ENCODE measurements at regions of chr22 and their contacts with region 1.

Region 1: DNA sequence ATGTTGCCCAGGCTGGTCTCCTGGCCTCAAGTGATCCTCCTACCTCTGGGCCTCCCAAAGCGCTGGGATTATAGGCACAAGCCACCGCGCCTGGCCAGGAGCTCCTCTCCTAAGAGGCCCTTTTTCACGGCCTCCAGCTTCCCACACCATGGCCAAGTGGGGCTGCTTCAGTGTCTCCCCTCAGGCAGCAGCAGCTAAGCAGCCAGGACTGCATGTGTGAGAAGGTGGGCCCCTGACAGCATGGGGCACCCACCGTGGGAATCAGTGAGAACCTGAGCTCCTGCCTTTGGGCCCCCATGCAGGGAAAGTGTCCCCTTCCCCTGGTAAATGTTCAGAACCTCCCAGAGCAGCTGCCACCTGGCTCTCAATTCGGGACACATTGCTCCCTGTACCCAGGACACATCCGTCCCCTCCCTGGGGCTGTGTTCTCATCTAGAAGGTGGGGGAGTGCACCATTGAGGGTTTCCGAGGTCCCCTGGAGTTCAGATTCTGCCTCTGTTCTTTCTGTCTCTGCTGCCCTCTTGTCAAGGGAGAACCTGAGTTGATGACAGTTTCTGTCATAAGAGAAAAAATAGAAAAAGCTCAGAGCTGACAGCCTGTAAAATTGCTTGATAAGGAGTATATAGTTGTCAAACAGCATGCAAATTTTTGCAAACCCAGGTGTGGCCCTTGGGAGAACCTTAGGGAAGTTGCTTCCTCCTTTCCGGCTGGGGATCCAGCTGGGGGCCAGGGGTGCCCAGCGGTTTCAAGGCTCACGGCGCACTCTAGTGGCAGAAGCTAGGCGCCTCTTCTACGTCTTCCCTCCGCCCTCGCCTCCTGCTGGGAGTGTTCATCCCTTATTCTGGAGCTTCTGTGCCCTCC is 29.7 kb downstream of the FAM83F start:
- DNase-seq: peak; percentile 26 to 59 (median 44)
- ATAC-seq: peak; percentile 79
- H3K4me3 ChIP-seq: no peak overlapping the region
- H3K4me3 Mint-ChIP-seq: no peak overlapping the region
- H3K27ac ChIP-seq: no peak overlapping the region
- H3K27ac Mint-ChIP-seq: no peak overlapping the region
- H3K4me1 ChIP-seq: peaks cover 0 to 4% of the 10 kb centered on the region in 2 donors
- H3K4me1 Mint-ChIP-seq: peaks cover 0 to 6% (median 4%) of the 10 kb centered on the region in 7 donors
- H3K27me3 ChIP-seq: no peaks in the 10 kb centered on the region
- H3K27me3 Mint-ChIP-seq: no peaks in the 10 kb centered on the region

Region 2: GRCh38 chr22:39490135-39490798 is 534.2 kb before region 1 on chr22:
- CTCF ChIA-PET with region 1: interaction called, 14 read pairs
- POLR2A ChIA-PET with region 1: no interaction called
- intact Hi-C with region 1: loop called (anchors 1 to 5 kb)
- DNase-seq: peak; percentile 43 to 83 (median 69)
- ATAC-seq: peak; percentile 97
- H3K4me3 ChIP-seq: no peak overlapping the region
- H3K4me3 Mint-ChIP-seq: peak overlapping the region in 1 of 10 donors; percentile 59
- H3K27ac ChIP-seq: no peak overlapping the region
- H3K27ac Mint-ChIP-seq: peak overlapping the region in 2 of 9 donors; percentile 82 to 88
- H3K4me1 ChIP-seq: no peaks in the 10 kb centered on the region
- H3K4me1 Mint-ChIP-seq: peaks cover 6 to 17% (median 14%) of the 10 kb centered on the region in 7 donors
- H3K27me3 ChIP-seq: no peaks in the 10 kb centered on the region
- H3K27me3 Mint-ChIP-seq: no peaks in the 10 kb centered on the region

Region 3: GRCh38 chr22:39559454-39560105 is 464.9 kb before region 1 on chr22:
- CTCF ChIA-PET with region 1: interaction called, 20 read pairs
- POLR2A ChIA-PET with region 1: interaction called, 3 read pairs
- intact Hi-C with region 1: loop called (anchors 1 to 5 kb)
- DNase-seq: no peak
- ATAC-seq: no peak
- H3K4me3 ChIP-seq: no peak overlapping the region
- H3K4me3 Mint-ChIP-seq: peak overlapping the region in 1 of 10 donors; percentile 77
- H3K27ac ChIP-seq: no peak overlapping the region
- H3K27ac Mint-ChIP-seq: no peak overlapping the region
- H3K4me1 ChIP-seq: no peaks in the 10 kb centered on the region
- H3K4me1 Mint-ChIP-seq: peaks cover 5 to 15% (median 6%) of the 10 kb centered on the region in 7 donors
- H3K27me3 ChIP-seq: peaks cover 0 to 8% of the 10 kb centered on the region in 2 donors
- H3K27me3 Mint-ChIP-seq: peaks cover 15 to 44% (median 19%) of the 10 kb centered on the region in 5 donors

Region 4: DNA sequence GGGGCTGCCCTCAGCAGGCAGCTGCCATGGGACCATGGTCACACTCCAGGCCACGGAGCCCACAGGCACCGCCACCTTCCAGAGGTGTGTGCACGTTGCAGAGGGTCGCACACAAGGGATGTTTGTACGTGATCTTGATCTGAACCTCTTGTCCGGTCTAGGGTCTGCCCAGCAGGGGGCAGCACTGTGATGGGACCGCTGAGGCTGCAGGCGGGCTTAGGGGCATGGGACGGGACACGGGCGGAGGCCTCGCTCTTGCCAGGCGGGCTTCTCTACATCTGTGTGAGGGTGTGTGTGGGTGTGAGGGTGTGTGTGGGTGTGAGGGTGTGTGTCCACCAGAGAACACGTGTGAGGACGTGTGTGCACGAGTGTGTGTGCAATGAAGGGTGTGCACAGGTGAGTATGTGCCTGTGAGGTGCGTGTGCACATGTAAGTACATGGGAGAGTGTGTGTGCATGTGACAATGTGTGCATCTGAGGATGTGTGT is 401.5 kb before region 1 on chr22:
- CTCF ChIA-PET with region 1: no interaction called
- POLR2A ChIA-PET with region 1: no interaction called
- intact Hi-C with region 1: loop called in 1 of 2 experiments (anchors 1 kb)
- DNase-seq: peak; percentile 60 to 73 (median 68)
- ATAC-seq: peak; percentile 84
- H3K4me3 ChIP-seq: no peak overlapping the region
- H3K4me3 Mint-ChIP-seq: no peak overlapping the region
- H3K27ac ChIP-seq: no peak overlapping the region
- H3K27ac Mint-ChIP-seq: no peak overlapping the region
- H3K4me1 ChIP-seq: peaks cover 0 to 5% of the 10 kb centered on the region in 2 donors
- H3K4me1 Mint-ChIP-seq: peaks cover 6 to 18% (median 11%) of the 10 kb centered on the region in 7 donors
- H3K27me3 ChIP-seq: no peaks in the 10 kb centered on the region
- H3K27me3 Mint-ChIP-seq: peaks cover 0 to 11% (median 2%) of the 10 kb centered on the region in 5 donors

Region 5: GRCh38 chr22:39940757-39941305 is 83.6 kb before region 1 on chr22:
- CTCF ChIA-PET with region 1: interaction called, 23 read pairs
- POLR2A ChIA-PET with region 1: interaction called, 3 read pairs
- intact Hi-C with region 1: loop called in 1 of 2 experiments (anchors 2 kb)
- DNase-seq: peak in 7 of 9 donors; percentile 56 to 81 (median 75)
- ATAC-seq: peak; percentile 76
- H3K4me3 ChIP-seq: peak overlapping the region; percentile 32
- H3K4me3 Mint-ChIP-seq: peak overlapping the region; percentile 39 to 84 (median 70)
- H3K27ac ChIP-seq: peak overlapping the region; percentile 79
- H3K27ac Mint-ChIP-seq: peak overlapping the region in 5 of 9 donors; percentile 80 to 99 (median 98)
- H3K4me1 ChIP-seq: peaks cover 85 to 96% of the 10 kb centered on the region in 2 donors
- H3K4me1 Mint-ChIP-seq: peaks cover 70 to 97% (median 93%) of the 10 kb centered on the region in 7 donors
- H3K27me3 ChIP-seq: no peaks in the 10 kb centered on the region
- H3K27me3 Mint-ChIP-seq: no peaks in the 10 kb centered on the region

Region 6: DNA sequence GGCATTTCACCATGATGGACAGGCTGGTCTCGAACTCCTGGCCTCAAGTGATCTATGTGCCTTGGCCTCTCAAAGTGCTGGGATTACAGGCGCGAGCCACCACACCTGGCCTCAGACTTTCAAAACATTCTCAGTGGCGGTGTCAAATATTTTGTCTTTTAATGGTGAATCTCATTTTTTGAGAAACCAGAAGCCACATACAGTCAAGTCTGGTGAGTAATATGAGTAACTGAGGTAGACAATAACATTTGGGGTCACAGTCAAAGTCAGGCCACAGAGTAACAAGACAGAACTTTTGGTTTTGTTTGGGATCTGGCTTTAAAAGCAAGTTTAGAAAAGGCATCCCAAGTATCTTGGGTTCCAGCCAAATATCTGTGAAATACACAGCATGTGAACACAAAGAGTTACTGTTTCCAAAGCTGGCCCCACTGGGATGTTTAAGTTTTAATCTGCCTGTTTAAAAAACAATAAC is 69.8 kb before region 1 on chr22:
- CTCF ChIA-PET with region 1: interaction called, 10 read pairs
- POLR2A ChIA-PET with region 1: no interaction called
- intact Hi-C with region 1: loop called in 1 of 2 experiments (anchors 1 kb)
- DNase-seq: no peak
- ATAC-seq: no peak
- H3K4me3 ChIP-seq: no peak overlapping the region
- H3K4me3 Mint-ChIP-seq: peak overlapping the region in 5 of 10 donors; percentile 19 to 80 (median 38)
- H3K27ac ChIP-seq: peak overlapping the region; percentile 69
- H3K27ac Mint-ChIP-seq: peak overlapping the region in 5 of 9 donors; percentile 85 to 98 (median 94)
- H3K4me1 ChIP-seq: peaks cover 61 to 86% of the 10 kb centered on the region in 2 donors
- H3K4me1 Mint-ChIP-seq: peaks cover 69 to 97% (median 89%) of the 10 kb centered on the region in 7 donors
- H3K27me3 ChIP-seq: no peaks in the 10 kb centered on the region
- H3K27me3 Mint-ChIP-seq: no peaks in the 10 kb centered on the region

Region 7: GRCh38 chr22:40009292-40009769 is 15.1 kb before region 1 on chr22:
- CTCF ChIA-PET with region 1: interaction called, 14 read pairs
- POLR2A ChIA-PET with region 1: interaction called, 3 read pairs
- intact Hi-C with region 1: no loop called
- DNase-seq: no peak
- ATAC-seq: peak; percentile 9
- H3K4me3 ChIP-seq: no peak overlapping the region
- H3K4me3 Mint-ChIP-seq: peak overlapping the region in 9 of 10 donors; percentile 77 to 89 (median 84)
- H3K27ac ChIP-seq: peak overlapping the region; percentile 61
- H3K27ac Mint-ChIP-seq: peak overlapping the region; percentile 18 to 96 (median 89)
- H3K4me1 ChIP-seq: peaks cover 0 to 10% of the 10 kb centered on the region in 2 donors
- H3K4me1 Mint-ChIP-seq: peaks cover 10 to 24% (median 17%) of the 10 kb centered on the region in 7 donors
- H3K27me3 ChIP-seq: peaks cover 0 to 3% of the 10 kb centered on the region in 2 donors
- H3K27me3 Mint-ChIP-seq: peaks cover 0 to 36% (median 5%) of the 10 kb centered on the region in 5 donors

Measured in naive thymus-derived CD4-positive, alpha-beta T cell (primary cell).